Common myeloid progenitor, CD34-positive (primary cell): ENCODE measurements at regions of chr1 and their contacts with region 1.

Region 1: GRCh38 chr1:66446261-66447001 is 87.5 kb upstream of the SGIP1 start:
- DNase-seq: peak; percentile 84 to 92 (median 86)
- H3K4me3 ChIP-seq: no peak overlapping the region
- H3K27ac ChIP-seq: peak overlapping the region in 1 of 2 experiments; percentile 73
- H3K4me1 ChIP-seq: peaks cover 12 to 31% (median 19%) of the 10 kb centered on the region in 4 experiments
- H3K27me3 ChIP-seq: no peaks in the 10 kb centered on the region

Region 2: DNA sequence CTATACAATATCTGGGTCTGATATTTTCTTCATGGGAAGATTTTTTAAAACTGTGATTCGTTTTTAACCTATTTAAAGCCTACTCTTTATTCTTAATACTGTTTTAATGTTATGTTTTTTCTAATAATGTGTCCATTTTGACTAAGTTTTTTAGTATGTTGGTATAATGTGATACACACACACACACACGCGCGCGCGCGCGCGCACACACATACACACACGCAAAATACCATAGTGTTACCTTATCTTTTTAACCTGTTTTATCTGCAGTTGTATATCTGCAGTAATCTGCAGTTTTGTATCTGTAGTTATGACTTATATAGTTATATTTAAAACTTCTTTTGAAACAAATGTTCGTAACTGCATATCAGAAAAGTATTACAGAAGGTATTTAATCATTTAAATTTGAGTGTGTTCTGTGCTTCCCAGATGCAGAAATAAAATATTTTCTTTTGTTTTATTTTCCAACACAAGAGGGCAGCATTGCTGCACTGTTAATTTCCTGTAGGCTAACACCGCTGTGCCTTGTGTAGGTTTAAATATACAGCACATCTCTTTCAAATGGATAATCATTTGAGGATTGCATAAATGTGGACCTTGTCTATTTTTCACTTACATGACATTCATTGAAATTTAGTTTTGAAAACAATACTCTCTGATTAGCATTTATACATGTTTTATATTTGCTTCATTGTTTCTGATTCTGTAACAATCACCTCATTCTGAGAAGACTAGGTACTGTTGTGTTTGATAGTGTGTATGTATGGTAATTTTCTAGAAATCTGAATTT is 487.7 kb before region 1 on chr1:
- CTCF ChIA-PET with region 1: interaction called, 36 read pairs
- POLR2A ChIA-PET with region 1: no interaction called
- DNase-seq: peak; percentile 54 to 77 (median 69)
- H3K4me3 ChIP-seq: no peak overlapping the region
- H3K27ac ChIP-seq: no peak overlapping the region
- H3K4me1 ChIP-seq: peaks cover 0 to 17% (median 7%) of the 10 kb centered on the region in 4 experiments
- H3K27me3 ChIP-seq: no peaks in the 10 kb centered on the region

Region 3: GRCh38 chr1:66265796-66266195 is 180.6 kb before region 1 on chr1:
- CTCF ChIA-PET with region 1: interaction called, 18 read pairs
- POLR2A ChIA-PET with region 1: no interaction called
- DNase-seq: no peak
- H3K4me3 ChIP-seq: no peak overlapping the region
- H3K27ac ChIP-seq: no peak overlapping the region
- H3K4me1 ChIP-seq: peaks cover 0 to 12% (median 5%) of the 10 kb centered on the region in 4 experiments
- H3K27me3 ChIP-seq: no peaks in the 10 kb centered on the region

Region 4: GRCh38 chr1:66343569-66344325 is 102.7 kb before region 1 on chr1:
- CTCF ChIA-PET with region 1: interaction called, 14 read pairs
- POLR2A ChIA-PET with region 1: no interaction called
- DNase-seq: no peak
- H3K4me3 ChIP-seq: no peak overlapping the region
- H3K27ac ChIP-seq: no peak overlapping the region
- H3K4me1 ChIP-seq: peaks cover 15 to 26% (median 22%) of the 10 kb centered on the region in 4 experiments
- H3K27me3 ChIP-seq: no peaks in the 10 kb centered on the region

Region 5: GRCh38 chr1:66367369-66367768 is 79.1 kb before region 1 on chr1:
- CTCF ChIA-PET with region 1: interaction called, 28 read pairs
- POLR2A ChIA-PET with region 1: interaction called, 3 read pairs
- DNase-seq: peak in 1 of 3 donors; percentile 36
- H3K4me3 ChIP-seq: no peak overlapping the region
- H3K27ac ChIP-seq: no peak overlapping the region
- H3K4me1 ChIP-seq: peaks cover 17 to 30% (median 23%) of the 10 kb centered on the region in 4 experiments
- H3K27me3 ChIP-seq: no peaks in the 10 kb centered on the region

Region 6: GRCh38 chr1:66384258-66384921 is 62.0 kb before region 1 on chr1:
- CTCF ChIA-PET with region 1: no interaction called
- POLR2A ChIA-PET with region 1: no interaction called
- DNase-seq: no peak
- H3K4me3 ChIP-seq: no peak overlapping the region
- H3K27ac ChIP-seq: no peak overlapping the region
- H3K4me1 ChIP-seq: peaks cover 3 to 8% (median 6%) of the 10 kb centered on the region in 4 experiments
- H3K27me3 ChIP-seq: no peaks in the 10 kb centered on the region

Region 7: GRCh38 chr1:66563094-66563800 is 116.8 kb after region 1 on chr1:
- CTCF ChIA-PET with region 1: no interaction called
- POLR2A ChIA-PET with region 1: no interaction called
- DNase-seq: no peak
- H3K4me3 ChIP-seq: no peak overlapping the region
- H3K27ac ChIP-seq: no peak overlapping the region
- H3K4me1 ChIP-seq: peaks cover 0 to 9% (median 2%) of the 10 kb centered on the region in 4 experiments
- H3K27me3 ChIP-seq: no peaks in the 10 kb centered on the region

Region 8: GRCh38 chr1:66725885-66726665 is 279.6 kb after region 1 on chr1:
- CTCF ChIA-PET with region 1: interaction called, 15 read pairs
- POLR2A ChIA-PET with region 1: no interaction called
- DNase-seq: peak; percentile 76 to 91 (median 90)
- H3K4me3 ChIP-seq: no peak overlapping the region
- H3K27ac ChIP-seq: no peak overlapping the region
- H3K4me1 ChIP-seq: peaks cover 5 to 50% (median 34%) of the 10 kb centered on the region in 4 experiments
- H3K27me3 ChIP-seq: no peaks in the 10 kb centered on the region

Region 9: GRCh38 chr1:66809736-66810326 is 363.4 kb after region 1 on chr1:
- CTCF ChIA-PET with region 1: no interaction called
- POLR2A ChIA-PET with region 1: no interaction called
- DNase-seq: no peak
- H3K4me3 ChIP-seq: no peak overlapping the region
- H3K27ac ChIP-seq: no peak overlapping the region
- H3K4me1 ChIP-seq: no peaks in the 10 kb centered on the region
- H3K27me3 ChIP-seq: no peaks in the 10 kb centered on the region

Region 10: DNA sequence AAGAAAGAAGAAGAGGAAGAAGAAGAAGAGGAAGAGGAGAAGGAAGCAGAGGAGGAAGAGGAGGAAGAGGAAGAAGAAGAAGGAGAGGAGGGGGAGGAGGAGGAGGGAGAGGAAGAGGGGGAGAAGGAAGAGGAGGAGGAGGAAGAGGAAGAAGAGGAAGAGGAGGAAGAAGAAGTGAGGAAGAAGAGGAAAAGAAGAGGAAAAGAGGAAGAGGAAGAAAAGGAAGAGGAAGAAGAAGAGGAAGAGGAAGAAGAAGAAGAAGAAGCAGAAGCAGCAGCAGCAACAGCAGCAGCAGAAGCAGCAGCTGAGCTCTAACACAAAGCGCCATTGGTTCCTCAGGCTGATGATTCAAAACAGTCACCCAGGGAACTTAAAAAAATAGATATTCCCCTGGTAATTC is 444.2 kb after region 1 on chr1:
- CTCF ChIA-PET with region 1: no interaction called
- POLR2A ChIA-PET with region 1: no interaction called
- DNase-seq: no peak
- H3K4me3 ChIP-seq: no peak overlapping the region
- H3K27ac ChIP-seq: no peak overlapping the region
- H3K4me1 ChIP-seq: peaks cover 0 to 2% (median 0%) of the 10 kb centered on the region in 4 experiments
- H3K27me3 ChIP-seq: no peaks in the 10 kb centered on the region